ENCODE measurements at regions of chr6 and their contacts with region 1.

Region 1: DNA sequence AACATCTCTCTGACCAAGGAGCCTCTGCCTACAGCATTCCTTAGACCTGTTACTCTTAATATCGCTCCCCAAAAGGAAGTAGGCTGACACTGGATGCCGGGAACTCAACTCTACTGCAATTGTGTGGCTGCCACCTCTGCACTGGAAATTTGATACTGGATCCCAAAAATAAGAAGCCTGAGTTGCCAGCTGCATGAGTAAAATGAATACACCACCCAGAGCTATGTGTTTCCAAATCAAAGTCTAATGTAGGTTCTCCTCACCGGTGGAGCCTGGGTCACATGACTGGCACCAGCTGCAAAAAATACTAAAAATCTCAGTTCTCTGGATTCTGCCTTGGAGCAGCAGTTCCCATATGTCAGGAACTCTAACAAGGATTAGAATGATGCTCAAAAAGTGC is 36.8 kb downstream of the UNC5CL start:
- DNase-seq: no peak
- H3K4me3 ChIP-seq: no peak overlapping the region
- H3K27ac ChIP-seq: no peak overlapping the region
- H3K4me1 ChIP-seq: peaks cover 0 to 4% of the 10 kb centered on the region in 2 donors
- H3K27me3 ChIP-seq: no peaks in the 10 kb centered on the region
- CTCF ChIP-seq: no peak

Region 2: DNA sequence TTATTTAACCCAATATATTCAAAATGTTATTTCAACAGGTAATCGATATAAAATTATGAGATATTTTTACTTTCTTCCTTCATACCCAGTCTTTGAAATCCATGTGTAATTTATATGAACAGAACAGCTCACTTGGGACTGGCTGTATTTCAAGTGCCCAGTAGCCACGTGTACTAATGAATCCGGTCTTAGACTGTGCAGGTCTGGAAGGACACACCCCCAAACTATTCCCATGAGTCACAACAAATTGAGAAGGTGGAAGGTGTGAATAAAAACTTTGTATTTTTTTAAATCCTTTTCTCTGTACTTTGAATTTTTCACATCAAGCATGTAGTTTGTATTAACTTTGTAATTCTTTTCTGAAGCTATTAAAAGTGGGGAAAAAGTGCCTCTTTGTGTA is 34.0 kb after region 1 on chr6:
- intact Hi-C with region 1: no loop called
- DNase-seq: no peak
- H3K4me3 ChIP-seq: no peak overlapping the region
- H3K27ac ChIP-seq: no peak overlapping the region
- H3K4me1 ChIP-seq: no peaks in the 10 kb centered on the region
- H3K27me3 ChIP-seq: no peaks in the 10 kb centered on the region
- CTCF ChIP-seq: no peak

Region 3: GRCh38 chr6:41066867-41067304 is 64.7 kb after region 1 on chr6:
- intact Hi-C with region 1: loop called (anchors 2 kb)
- DNase-seq: peak in 1 of 2 donors; percentile 87
- H3K4me3 ChIP-seq: no peak overlapping the region
- H3K27ac ChIP-seq: no peak overlapping the region
- H3K4me1 ChIP-seq: peaks cover 3 to 7% of the 10 kb centered on the region in 2 donors
- H3K27me3 ChIP-seq: no peaks in the 10 kb centered on the region
- CTCF ChIP-seq: peak; percentile 65 to 79 (median 67)